Prostate gland (tissue), 2 donors: ENCODE measurements at regions of chr16 and their contacts with region 1.

Region 1: GRCh38 chr16:75198135-75198600 is 8.8 kb downstream of the CTRB2 start:
- DNase-seq: no peak
- H3K4me3 ChIP-seq: no peak overlapping the region
- H3K27ac ChIP-seq: no peak overlapping the region
- H3K4me1 ChIP-seq: no peaks in the 10 kb centered on the region
- H3K27me3 ChIP-seq: no peaks in the 10 kb centered on the region
- CTCF ChIP-seq: no peak
- POLR2A ChIP-seq: no peak

Region 2: GRCh38 chr16:75251280-75252048 is 53.3 kb after region 1 on chr16 and contains the start of gene BCAR1:
- intact Hi-C with region 1: no loop called
- DNase-seq: peak; percentile 88
- H3K4me3 ChIP-seq: peak within 1 kb of the TSS; percentile 81 to 85
- H3K27ac ChIP-seq: peak within 1 kb of the TSS; percentile 88 to 89
- H3K4me1 ChIP-seq: peaks cover 27% of the 10 kb centered on the region
- H3K27me3 ChIP-seq: no peaks in the 10 kb centered on the region
- CTCF ChIP-seq: peak in 1 of 4 experiments; percentile 17
- POLR2A ChIP-seq: peak; percentile 42
- total RNA-seq, gene BCAR1: 51.1 to 181 TPM

Region 3: GRCh38 chr16:75392911-75393310 is 194.7 kb after region 1 on chr16:
- intact Hi-C with region 1: no loop called
- DNase-seq: no peak
- H3K4me3 ChIP-seq: no peak overlapping the region
- H3K27ac ChIP-seq: no peak overlapping the region
- H3K4me1 ChIP-seq: no peaks in the 10 kb centered on the region
- H3K27me3 ChIP-seq: no peaks in the 10 kb centered on the region
- CTCF ChIP-seq: no peak
- POLR2A ChIP-seq: no peak

Region 4: DNA sequence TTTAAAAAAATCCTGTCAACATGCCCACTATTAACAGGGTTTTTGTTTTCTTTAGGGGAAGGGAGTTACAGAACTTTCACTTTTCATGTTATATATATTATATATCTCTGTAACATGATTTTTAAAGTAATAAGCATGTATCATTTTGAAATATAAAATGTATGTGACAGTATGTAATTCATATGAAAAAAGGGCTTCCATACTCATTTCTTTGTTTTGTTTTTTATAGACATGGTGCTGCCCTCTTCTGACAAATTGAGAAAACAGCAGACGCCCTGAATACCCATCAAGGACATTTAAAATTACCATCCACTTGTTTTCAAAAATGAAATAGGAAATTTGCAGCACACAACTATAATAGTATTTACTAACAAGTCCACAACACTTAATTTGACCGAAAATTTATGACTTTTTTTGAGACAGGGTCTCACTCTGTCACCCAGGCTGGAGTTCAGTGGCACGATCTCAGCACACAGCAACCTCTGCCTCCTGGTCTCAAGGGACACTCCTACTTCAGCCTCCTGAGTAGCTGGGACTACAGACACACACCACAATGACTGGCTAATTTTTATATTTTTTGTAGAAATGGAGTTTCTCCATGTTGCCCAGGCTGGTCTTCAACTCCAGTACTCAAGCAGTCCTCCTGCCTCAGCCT is 204.8 kb after region 1 on chr16:
- intact Hi-C with region 1: loop called (anchors 2 kb)
- DNase-seq: no peak
- H3K4me3 ChIP-seq: no peak overlapping the region
- H3K27ac ChIP-seq: peak overlapping the region; percentile 10 to 50
- H3K4me1 ChIP-seq: peaks cover 6% of the 10 kb centered on the region
- H3K27me3 ChIP-seq: no peaks in the 10 kb centered on the region
- CTCF ChIP-seq: peak in 3 of 4 experiments; percentile 42 to 75 (median 71)
- POLR2A ChIP-seq: no peak

Region 5: DNA sequence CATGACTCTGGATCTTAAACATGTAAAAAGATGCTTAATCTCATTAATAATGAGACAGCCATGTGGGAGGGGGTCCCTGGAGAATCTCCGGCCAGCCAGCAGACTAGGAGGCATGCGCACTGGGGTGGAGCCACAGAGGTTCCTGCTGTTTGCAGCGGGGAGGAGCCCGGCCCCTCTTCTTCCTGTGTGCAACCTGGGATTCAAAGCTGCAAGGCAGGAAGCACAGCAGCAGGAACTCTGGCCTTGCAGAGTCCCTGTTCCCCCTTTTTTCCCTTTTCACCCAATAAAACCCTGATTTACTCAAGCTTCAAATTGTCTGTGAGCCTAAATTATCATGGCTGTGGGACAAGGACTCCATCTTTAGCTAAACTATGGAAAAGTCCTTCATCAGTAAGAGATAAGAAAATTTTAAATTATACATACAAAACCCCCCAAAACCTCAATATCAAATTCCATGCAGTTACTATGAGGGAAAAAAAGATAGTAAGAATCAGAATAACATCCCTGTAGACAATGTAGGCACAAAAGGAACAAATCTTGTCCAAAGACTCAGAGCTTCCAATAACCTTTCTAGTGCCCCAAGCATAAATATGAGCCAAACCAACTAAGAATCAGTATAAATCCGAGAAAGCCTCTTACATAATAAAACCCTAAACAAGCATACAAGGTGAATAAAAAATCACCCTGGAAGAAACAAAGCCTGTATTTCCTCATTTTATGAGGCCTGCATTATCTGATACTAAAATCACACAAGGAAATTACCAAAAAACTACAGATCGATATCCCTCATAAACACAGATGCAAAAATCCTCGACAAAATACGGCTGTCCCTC is 223.0 kb after region 1 on chr16:
- intact Hi-C with region 1: no loop called
- DNase-seq: peak; percentile 35
- H3K4me3 ChIP-seq: no peak overlapping the region
- H3K27ac ChIP-seq: no peak overlapping the region
- H3K4me1 ChIP-seq: no peaks in the 10 kb centered on the region
- H3K27me3 ChIP-seq: no peaks in the 10 kb centered on the region
- CTCF ChIP-seq: no peak
- POLR2A ChIP-seq: no peak

Region 6: GRCh38 chr16:75464130-75464918 is 266.2 kb after region 1 on chr16 and contains the start of gene TMEM170A:
- intact Hi-C with region 1: loop called (anchors 1 kb)
- DNase-seq: peak; percentile 99
- H3K4me3 ChIP-seq: peak within 1 kb of the TSS; percentile 85 to 92
- H3K27ac ChIP-seq: peak within 1 kb of the TSS; percentile 96 to 98
- H3K4me1 ChIP-seq: no peaks in the 10 kb centered on the region
- H3K27me3 ChIP-seq: no peaks in the 10 kb centered on the region
- CTCF ChIP-seq: peak; percentile 100
- POLR2A ChIP-seq: peak; percentile 95
- total RNA-seq, gene TMEM170A: 21.5 to 35.9 TPM

Region 7: GRCh38 chr16:75764154-75764768 is 566.1 kb after region 1 on chr16:
- intact Hi-C with region 1: loop called (anchors 10 kb)
- DNase-seq: peak; percentile 47
- H3K4me3 ChIP-seq: no peak overlapping the region
- H3K27ac ChIP-seq: no peak overlapping the region
- H3K4me1 ChIP-seq: no peaks in the 10 kb centered on the region
- H3K27me3 ChIP-seq: no peaks in the 10 kb centered on the region
- CTCF ChIP-seq: peak; percentile 33 to 84 (median 68)
- POLR2A ChIP-seq: no peak